SK-N-SH (cell line): ENCODE measurements at regions of chr17 and their contacts with region 1.

Region 1: GRCh38 chr17:69607162-69607834 is 192.8 kb downstream of the MAP2K6 start:
- DNase-seq: peak; percentile 62
- H3K4me3 ChIP-seq: no peak overlapping the region; a peak in 1 of 4 replicates
- H3K27ac ChIP-seq: peak overlapping the region; percentile 96 to 99
- H3K4me1 ChIP-seq: peaks cover 23 to 30% of the 10 kb centered on the region in 2 experiments
- H3K27me3 ChIP-seq: no peaks in the 10 kb centered on the region
- CTCF ChIP-seq: peak; percentile 100
- EP300 ChIP-seq: peak; percentile 42 to 69; a peak in 1 of 4 replicates
- RAD21 ChIP-seq: peak; percentile 95

Region 2: GRCh38 chr17:69473841-69474831 is 133.2 kb before region 1 on chr17:
- CTCF ChIA-PET with region 1: no interaction called
- POLR2A ChIA-PET with region 1: no interaction called
- DNase-seq: no peak
- H3K4me3 ChIP-seq: no peak overlapping the region
- H3K27ac ChIP-seq: peak overlapping the region in 1 of 2 experiments; percentile 3; a peak in 1 of 4 replicates
- H3K4me1 ChIP-seq: 0 out of 4 replicates have a peak, but pooled peaks cover 0 to 3% of the 10 kb centered on the region in 2 experiments
- H3K27me3 ChIP-seq: no peaks in the 10 kb centered on the region
- CTCF ChIP-seq: no peak
- EP300 ChIP-seq: no peak
- RAD21 ChIP-seq: no peak

Region 3: DNA sequence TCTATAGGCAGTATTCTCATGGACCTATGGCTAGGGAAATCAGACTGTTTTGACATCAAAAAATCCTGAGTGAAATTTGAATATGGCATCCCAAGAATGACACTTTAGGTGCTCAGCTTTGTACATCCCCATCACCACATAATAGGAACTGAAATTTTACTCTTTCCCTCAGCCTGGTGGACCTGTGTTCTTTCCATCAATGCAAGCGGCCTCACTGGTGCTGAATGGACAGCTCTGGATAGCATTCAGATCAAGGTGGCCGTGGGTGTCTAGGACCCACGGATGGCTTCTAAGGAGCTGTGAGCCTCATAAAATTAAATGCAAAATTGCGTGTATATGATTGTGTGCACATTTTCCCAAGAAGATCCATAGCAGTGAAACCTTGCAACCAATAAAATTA is 40.2 kb before region 1 on chr17:
- CTCF ChIA-PET with region 1: interaction called, 11 read pairs
- POLR2A ChIA-PET with region 1: no interaction called
- DNase-seq: no peak
- H3K4me3 ChIP-seq: no peak overlapping the region
- H3K27ac ChIP-seq: no peak overlapping the region
- H3K4me1 ChIP-seq: peaks cover 0 to 3% of the 10 kb centered on the region in 2 experiments; a peak in 1 of 4 replicates
- H3K27me3 ChIP-seq: no peaks in the 10 kb centered on the region
- CTCF ChIP-seq: no peak
- EP300 ChIP-seq: no peak
- RAD21 ChIP-seq: no peak

Region 4: GRCh38 chr17:69581061-69581961 is 26.0 kb before region 1 on chr17:
- CTCF ChIA-PET with region 1: interaction called, 13 read pairs
- POLR2A ChIA-PET with region 1: no interaction called
- DNase-seq: no peak
- H3K4me3 ChIP-seq: no peak overlapping the region
- H3K27ac ChIP-seq: no peak overlapping the region
- H3K4me1 ChIP-seq: no peaks in the 10 kb centered on the region
- H3K27me3 ChIP-seq: no peaks in the 10 kb centered on the region
- CTCF ChIP-seq: no peak
- EP300 ChIP-seq: no peak
- RAD21 ChIP-seq: no peak

Region 5: DNA sequence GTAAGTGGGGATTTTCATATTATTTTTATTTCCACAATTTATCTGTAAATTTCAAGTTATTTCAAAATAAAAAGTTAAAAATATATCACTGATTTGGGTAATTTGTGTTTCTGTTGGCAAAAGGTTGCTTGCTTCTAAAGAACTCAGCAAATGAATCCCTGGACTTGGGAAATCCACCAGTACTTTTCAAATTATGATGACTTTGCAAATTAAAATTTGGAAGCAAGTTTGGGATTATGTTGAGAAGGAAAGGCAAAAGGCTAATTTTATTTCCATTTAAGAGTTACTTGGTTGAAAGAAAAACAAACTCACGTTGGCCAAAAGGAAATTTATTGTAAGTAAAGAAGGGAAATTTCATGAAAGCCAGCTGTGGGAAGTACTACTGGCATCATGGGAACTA is 27.5 kb after region 1 on chr17:
- CTCF ChIA-PET with region 1: interaction called, 12 read pairs
- POLR2A ChIA-PET with region 1: no interaction called
- DNase-seq: no peak
- H3K4me3 ChIP-seq: no peak overlapping the region
- H3K27ac ChIP-seq: no peak overlapping the region
- H3K4me1 ChIP-seq: peaks cover 0 to 6% of the 10 kb centered on the region in 2 experiments; a peak in 1 of 4 replicates
- H3K27me3 ChIP-seq: no peaks in the 10 kb centered on the region
- CTCF ChIP-seq: no peak
- EP300 ChIP-seq: no peak
- RAD21 ChIP-seq: no peak

Region 6: GRCh38 chr17:69733171-69734012 is 126.1 kb after region 1 on chr17:
- CTCF ChIA-PET with region 1: no interaction called
- POLR2A ChIA-PET with region 1: no interaction called
- DNase-seq: no peak
- H3K4me3 ChIP-seq: no peak overlapping the region
- H3K27ac ChIP-seq: peak overlapping the region in 1 of 2 experiments; percentile 12; a peak in 1 of 4 replicates
- H3K4me1 ChIP-seq: peaks cover 8 to 24% of the 10 kb centered on the region in 2 experiments; a peak in 3 of 4 replicates
- H3K27me3 ChIP-seq: no peaks in the 10 kb centered on the region
- CTCF ChIP-seq: no peak
- EP300 ChIP-seq: peak in 1 of 2 experiments; percentile 29; a peak in 1 of 4 replicates
- RAD21 ChIP-seq: no peak

Region 7: GRCh38 chr17:70144260-70144846 is 537.1 kb after region 1 on chr17:
- CTCF ChIA-PET with region 1: interaction called, 23 read pairs
- POLR2A ChIA-PET with region 1: no interaction called
- DNase-seq: peak; percentile 47
- H3K4me3 ChIP-seq: no peak overlapping the region; a peak in 1 of 4 replicates
- H3K27ac ChIP-seq: no peak overlapping the region
- H3K4me1 ChIP-seq: peaks cover 0 to 3% of the 10 kb centered on the region in 2 experiments; a peak in 2 of 4 replicates
- H3K27me3 ChIP-seq: no peaks in the 10 kb centered on the region
- CTCF ChIP-seq: peak; percentile 95
- EP300 ChIP-seq: no peak
- RAD21 ChIP-seq: peak; percentile 83

Region 8: DNA sequence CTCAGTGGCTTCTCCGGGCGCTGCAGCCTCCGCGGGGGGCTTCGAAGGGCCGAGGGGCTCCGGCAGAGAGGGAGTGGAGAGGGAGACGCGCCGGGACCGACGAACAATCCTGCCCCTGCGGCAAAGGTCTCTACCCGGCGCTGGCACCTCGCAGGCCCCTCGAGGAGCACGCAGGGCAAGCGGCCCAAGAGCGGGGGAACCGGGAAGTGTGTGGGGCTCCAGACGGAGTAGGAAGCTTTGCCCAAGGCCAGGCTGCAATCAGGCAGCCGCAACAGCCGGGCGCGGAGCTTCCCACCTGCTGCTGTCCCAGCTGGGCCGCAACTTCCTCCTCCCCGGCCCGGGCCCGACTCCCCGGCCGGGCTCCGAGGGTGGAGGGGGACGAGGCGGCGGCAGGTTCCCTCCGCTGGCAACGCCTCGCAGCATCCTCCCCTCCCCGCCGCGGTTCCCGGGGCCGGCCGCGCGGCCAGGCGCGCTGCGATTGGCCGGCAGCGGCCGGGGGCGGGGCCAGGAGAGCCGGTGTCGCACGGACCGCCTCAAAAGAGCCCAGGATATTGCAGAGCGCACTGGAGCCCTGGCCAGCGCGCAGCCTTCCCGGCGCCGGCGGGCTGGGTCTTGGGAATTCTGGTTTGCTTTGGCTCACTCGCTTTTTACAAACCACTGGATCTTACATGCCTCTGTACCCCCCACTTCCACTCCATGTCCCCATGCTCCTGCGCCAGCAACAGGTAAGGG is 561.8 kb after region 1 on chr17 and contains the start of gene KCNJ2:
- CTCF ChIA-PET with region 1: interaction called, 35 read pairs
- POLR2A ChIA-PET with region 1: no interaction called
- DNase-seq: peak; percentile 97
- H3K4me3 ChIP-seq: peak within 1 kb of the TSS; percentile 85 to 86
- H3K27ac ChIP-seq: peak within 1 kb of the TSS; percentile 46 to 78
- H3K4me1 ChIP-seq: peaks cover 3 to 33% of the 10 kb centered on the region in 2 experiments; a peak in 3 of 4 replicates
- H3K27me3 ChIP-seq: no peaks in the 10 kb centered on the region
- CTCF ChIP-seq: no peak
- EP300 ChIP-seq: peak; percentile 17 to 42; a peak in 2 of 4 replicates
- RAD21 ChIP-seq: peak; percentile 9; the same call in 1 of the 2 replicates
- polyA plus RNA-seq, gene KCNJ2: 0.18 and 0.21 TPM in 2 replicates

Region 9: GRCh38 chr17:70629902-70630301 is 1022.6 kb after region 1 on chr17:
- CTCF ChIA-PET with region 1: interaction called, 23 read pairs
- POLR2A ChIA-PET with region 1: no interaction called
- DNase-seq: peak; percentile 43
- H3K4me3 ChIP-seq: no peak overlapping the region
- H3K27ac ChIP-seq: no peak overlapping the region
- H3K4me1 ChIP-seq: no peaks in the 10 kb centered on the region
- H3K27me3 ChIP-seq: peaks cover 6% of the 10 kb centered on the region; the same call in 1 of the 2 replicates
- CTCF ChIP-seq: peak; percentile 56
- EP300 ChIP-seq: no peak
- RAD21 ChIP-seq: peak; percentile 84